ENCODE measurements at regions of chr7 and their contacts with region 1.

Region 1: GRCh38 chr7:24572997-24573625 is at the start of gene PALS2:
- DNase-seq: peak; percentile 72 to 90
- ATAC-seq: peak; percentile 72 to 82 (median 76)
- H3K4me3 ChIP-seq: peak within 1 kb of the TSS; percentile 88
- H3K4me3 Mint-ChIP-seq: peak within 1 kb of the TSS; percentile 95
- H3K27ac ChIP-seq: peak within 1 kb of the TSS; percentile 70
- H3K27ac Mint-ChIP-seq: peak within 1 kb of the TSS; percentile 64 to 82
- H3K4me1 ChIP-seq: peaks cover 16% of the 10 kb centered on the region
- H3K4me1 Mint-ChIP-seq: peaks cover 24 to 26% of the 10 kb centered on the region in 2 donors
- H3K27me3 ChIP-seq: no peaks in the 10 kb centered on the region
- H3K27me3 Mint-ChIP-seq: peaks cover 24 to 28% of the 10 kb centered on the region in 2 donors
- CTCF ChIP-seq: no peak
- total RNA-seq, gene PALS2: 15.2 to 16.3 (median 15.4) TPM

Region 2: DNA sequence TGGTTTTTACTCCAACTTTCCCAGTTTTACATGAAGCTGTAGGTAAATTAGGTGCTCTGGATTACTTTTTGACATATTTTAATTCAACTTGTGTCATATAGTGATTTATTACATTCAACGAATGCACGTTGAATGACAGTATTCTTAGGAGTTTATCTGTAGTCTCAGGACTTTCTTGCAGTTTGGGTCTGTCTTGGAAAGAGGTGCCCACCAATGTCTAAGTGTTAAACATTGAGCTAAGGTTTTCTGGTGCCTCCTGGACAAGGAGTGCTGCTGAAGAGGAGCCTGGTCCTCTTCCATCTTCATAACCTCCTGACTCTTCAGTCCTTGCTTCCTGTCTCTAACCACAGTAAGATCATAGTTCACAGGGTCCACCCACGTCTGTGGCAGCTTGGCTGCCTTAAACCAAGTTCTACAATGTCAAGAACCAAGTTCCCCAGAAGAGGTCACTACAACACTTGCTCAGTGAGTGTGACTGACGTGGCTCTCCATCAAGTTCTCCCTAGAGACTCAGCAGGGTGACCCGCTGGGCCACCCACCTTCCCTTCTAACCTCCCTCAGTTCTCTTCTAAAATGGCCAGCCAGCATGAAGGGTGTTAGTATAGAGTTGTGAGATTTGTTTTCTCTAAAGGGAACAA is 283.0 kb before region 1 on chr7:
- intact Hi-C with region 1: loop called (anchors 5 kb)
- DNase-seq: peak in 1 of 2 donors; percentile 62
- ATAC-seq: peak; percentile 82 to 93 (median 87)
- H3K4me3 ChIP-seq: no peak overlapping the region
- H3K4me3 Mint-ChIP-seq: no peak overlapping the region
- H3K27ac ChIP-seq: no peak overlapping the region
- H3K27ac Mint-ChIP-seq: no peak overlapping the region
- H3K4me1 ChIP-seq: no peaks in the 10 kb centered on the region
- H3K4me1 Mint-ChIP-seq: peaks cover 6 to 7% of the 10 kb centered on the region in 2 donors
- H3K27me3 ChIP-seq: peaks cover 5% of the 10 kb centered on the region
- H3K27me3 Mint-ChIP-seq: peaks cover 20 to 58% of the 10 kb centered on the region in 2 donors
- CTCF ChIP-seq: peak; percentile 42

Region 3: GRCh38 chr7:24442170-24442777 is 130.8 kb before region 1 on chr7:
- intact Hi-C with region 1: loop called (anchors 5 kb)
- DNase-seq: peak; percentile 30 to 47
- ATAC-seq: peak; percentile 79 to 84 (median 82)
- H3K4me3 ChIP-seq: no peak overlapping the region
- H3K4me3 Mint-ChIP-seq: peak overlapping the region; percentile 90
- H3K27ac ChIP-seq: peak overlapping the region; percentile 79
- H3K27ac Mint-ChIP-seq: peak overlapping the region; percentile 82 to 94
- H3K4me1 ChIP-seq: peaks cover 18% of the 10 kb centered on the region
- H3K4me1 Mint-ChIP-seq: peaks cover 32 to 40% of the 10 kb centered on the region in 2 donors
- H3K27me3 ChIP-seq: no peaks in the 10 kb centered on the region
- H3K27me3 Mint-ChIP-seq: no peaks in the 10 kb centered on the region
- CTCF ChIP-seq: no peak